ENCODE measurements at regions of chr22 and their contacts with region 1.

Region 1: DNA sequence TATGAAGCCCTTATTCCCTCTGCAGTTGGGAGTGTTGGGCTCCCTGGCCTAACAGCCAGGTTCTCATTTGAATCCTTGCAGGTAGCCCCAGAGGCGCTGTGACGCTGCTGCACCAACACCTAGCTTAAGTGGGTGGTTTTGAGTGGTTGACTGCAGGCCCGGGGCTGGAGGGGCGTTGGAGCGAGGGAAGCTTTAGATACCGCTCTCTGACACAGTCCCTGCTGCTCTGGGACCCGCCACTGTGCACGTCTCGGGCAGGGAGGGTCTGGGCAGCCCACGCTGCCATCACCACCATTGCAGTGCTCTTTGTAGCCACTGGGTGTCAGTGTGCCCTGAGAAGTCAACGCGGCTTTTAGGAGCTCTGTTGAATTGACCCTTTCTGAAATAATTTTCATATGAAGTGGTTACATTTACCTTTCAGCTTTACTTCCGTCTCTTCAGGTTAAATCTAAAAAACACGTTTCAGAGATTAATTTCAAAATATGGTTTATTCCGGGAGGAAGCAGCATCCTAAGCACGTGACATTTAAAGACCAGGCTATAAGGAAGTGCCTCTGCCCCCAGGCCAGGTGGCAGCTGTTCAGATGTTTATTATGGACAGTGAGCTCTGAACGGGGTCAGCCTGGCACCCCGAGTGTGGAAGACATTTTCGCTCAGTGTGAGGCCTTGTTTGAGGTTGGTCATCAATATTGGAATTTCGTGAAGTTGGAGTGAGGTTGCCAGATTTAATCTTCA is 30.9 kb upstream of the PARVB start:
- DNase-seq: no peak
- H3K4me3 ChIP-seq: no peak overlapping the region
- CTCF ChIP-seq: peak; percentile 93

Region 2: DNA sequence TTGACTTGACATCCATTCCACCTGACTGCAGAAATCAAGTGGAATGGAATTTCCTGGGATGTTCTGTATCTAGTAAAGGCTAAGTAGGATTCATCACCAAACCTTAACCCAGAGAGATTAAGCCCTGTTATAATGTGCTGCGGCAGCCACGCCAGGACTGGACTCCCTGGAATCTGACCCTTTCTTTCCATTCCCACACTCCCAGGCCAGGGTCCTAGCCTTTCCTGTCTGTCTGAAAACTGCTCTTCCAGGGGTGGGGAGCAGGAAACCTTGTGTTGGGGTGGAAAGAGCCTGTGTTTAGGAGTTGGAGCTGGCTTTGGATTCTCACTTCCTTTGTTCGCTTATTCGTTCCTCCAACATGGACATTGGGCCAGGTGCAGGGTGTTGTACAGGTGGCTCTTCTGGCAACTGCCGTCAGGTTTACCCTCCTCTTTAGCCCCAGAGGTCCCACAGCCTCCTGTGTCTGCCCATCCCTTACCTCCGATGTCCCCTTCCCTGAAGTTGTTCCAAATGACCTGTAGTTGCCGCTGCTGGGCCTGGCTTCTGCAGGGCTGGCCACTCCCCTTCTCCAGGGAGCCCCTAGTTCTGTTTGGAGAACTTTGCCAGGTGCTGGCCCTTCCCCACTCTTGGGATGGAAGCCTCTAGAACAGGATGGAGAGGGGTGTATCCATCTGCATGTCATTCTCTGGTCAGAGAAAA is 10.4 kb after region 1 on chr22:
- CTCF ChIA-PET with region 1: interaction called, 95 read pairs
- POLR2A ChIA-PET with region 1: no interaction called
- DNase-seq: no peak
- H3K4me3 ChIP-seq: no peak overlapping the region
- CTCF ChIP-seq: peak; percentile 10

Region 3: GRCh38 chr22:44068422-44069191 is 75.4 kb after region 1 on chr22:
- CTCF ChIA-PET with region 1: interaction called, 30 read pairs
- POLR2A ChIA-PET with region 1: no interaction called
- DNase-seq: no peak
- H3K4me3 ChIP-seq: no peak overlapping the region
- CTCF ChIP-seq: no peak

Region 4: GRCh38 chr22:44098083-44098739 is 105.0 kb after region 1 on chr22:
- CTCF ChIA-PET with region 1: interaction called, 10 read pairs
- POLR2A ChIA-PET with region 1: no interaction called
- DNase-seq: no peak
- H3K4me3 ChIP-seq: no peak overlapping the region
- CTCF ChIP-seq: no peak

Region 5: DNA sequence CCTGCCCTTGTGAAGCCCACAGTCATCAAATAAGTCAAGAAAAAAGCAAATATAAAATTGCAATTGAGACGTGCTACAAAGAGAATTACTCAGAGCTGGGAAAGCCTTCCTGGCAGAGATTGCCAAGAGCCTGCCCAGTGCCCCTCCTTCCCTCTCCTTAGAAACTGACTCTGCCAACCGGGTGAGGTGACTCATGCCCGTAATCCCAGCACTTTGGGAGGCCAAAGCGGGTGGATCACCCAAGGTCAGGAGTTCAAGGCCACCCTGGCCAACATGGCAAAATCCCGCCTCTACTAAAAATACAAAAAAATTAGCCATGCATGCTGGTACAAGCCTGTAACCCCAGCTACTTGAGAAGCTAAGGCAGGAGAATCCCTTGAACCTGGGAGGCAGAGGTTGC is 580.9 kb after region 1 on chr22:
- CTCF ChIA-PET with region 1: interaction called, 25 read pairs
- POLR2A ChIA-PET with region 1: no interaction called
- DNase-seq: peak; percentile 16
- H3K4me3 ChIP-seq: no peak overlapping the region
- CTCF ChIP-seq: no peak

Region 6: DNA sequence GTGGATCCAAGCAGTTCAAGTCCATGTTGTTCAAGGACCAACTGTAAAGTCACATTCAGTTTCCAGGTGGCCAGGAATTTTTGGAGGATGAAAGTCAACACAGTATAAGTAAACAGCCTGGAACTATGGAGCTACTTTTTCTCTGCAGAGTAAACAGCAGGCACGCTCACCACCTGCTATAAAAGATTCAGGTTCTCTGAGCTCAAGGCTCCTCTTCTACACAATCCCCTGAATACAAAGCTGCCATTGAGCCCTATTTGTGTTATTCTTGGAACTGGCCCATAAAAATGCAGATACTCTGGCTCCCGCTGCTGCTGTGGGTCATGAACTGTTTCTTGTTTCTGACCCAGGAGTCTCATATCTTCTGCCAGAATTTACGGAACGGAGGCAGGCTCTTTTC is 651.9 kb after region 1 on chr22:
- CTCF ChIA-PET with region 1: interaction called, 16 read pairs
- POLR2A ChIA-PET with region 1: no interaction called
- DNase-seq: no peak
- H3K4me3 ChIP-seq: no peak overlapping the region
- CTCF ChIP-seq: no peak